Right cardiac atrium (tissue), 5 donors: ENCODE measurements at regions of chr13 and their contacts with region 1.

Region 1: DNA sequence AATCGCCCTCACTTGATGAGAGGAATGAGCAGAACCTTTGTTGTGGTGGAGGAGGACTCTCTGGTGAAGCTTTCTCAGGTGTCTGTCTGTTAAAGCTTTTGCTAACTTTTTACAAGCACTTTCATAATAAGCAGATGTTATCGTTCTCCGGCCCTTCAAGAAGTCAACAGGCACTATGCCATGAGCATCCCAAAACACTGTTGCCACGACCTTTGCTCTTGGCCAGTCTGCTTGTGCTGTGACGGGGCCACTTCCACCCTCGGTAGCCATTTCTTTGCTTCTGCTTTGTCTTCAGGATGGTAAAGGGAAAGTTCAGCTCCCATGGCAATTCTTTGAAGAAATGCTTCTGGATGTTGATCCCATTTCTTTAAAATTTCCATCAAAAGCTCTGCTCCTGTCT is 93.5 kb upstream of the ANKRD10 start:
- DNase-seq: no peak
- ATAC-seq: no peak
- H3K4me3 ChIP-seq: no peak overlapping the region
- H3K27ac ChIP-seq: no peak overlapping the region
- H3K4me1 ChIP-seq: peaks cover 8% of the 10 kb centered on the region
- H3K27me3 ChIP-seq: no peaks in the 10 kb centered on the region

Region 2: DNA sequence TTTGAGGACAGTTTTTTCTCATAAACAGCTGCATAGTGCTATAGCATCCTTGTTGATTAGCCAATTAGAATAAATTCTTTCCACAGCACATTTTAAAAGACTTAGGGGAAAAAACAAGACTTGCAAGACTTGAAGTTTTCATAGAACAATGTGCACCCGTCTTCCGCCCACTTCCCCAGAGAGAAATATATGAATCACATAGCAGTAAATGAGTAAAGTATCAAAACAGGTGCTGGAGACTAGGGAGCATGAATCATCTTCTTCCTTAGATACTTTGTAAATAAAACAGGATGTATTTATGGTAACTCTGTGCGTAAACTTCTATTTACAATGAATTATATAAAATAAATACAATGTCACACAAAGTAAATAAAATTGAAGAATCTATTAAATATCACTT is 626.1 kb before region 1 on chr13:
- intact Hi-C with region 1: no loop called
- DNase-seq: no peak
- ATAC-seq: no peak
- H3K4me3 ChIP-seq: no peak overlapping the region
- H3K27ac ChIP-seq: no peak overlapping the region
- H3K4me1 ChIP-seq: peaks cover 16% of the 10 kb centered on the region
- H3K27me3 ChIP-seq: no peaks in the 10 kb centered on the region

Region 3: GRCh38 chr13:111046590-111047141 is 38.3 kb after region 1 on chr13:
- intact Hi-C with region 1: loop called in 1 of 4 experiments (anchors 2 kb)
- DNase-seq: peak in 1 of 3 donors; percentile 67
- ATAC-seq: peak; percentile 30 to 34
- H3K4me3 ChIP-seq: no peak overlapping the region
- H3K27ac ChIP-seq: no peak overlapping the region
- H3K4me1 ChIP-seq: no peaks in the 10 kb centered on the region
- H3K27me3 ChIP-seq: no peaks in the 10 kb centered on the region